SK-N-SH (cell line): ENCODE measurements at regions of chr7 and their contacts with region 1.

Region 1: DNA sequence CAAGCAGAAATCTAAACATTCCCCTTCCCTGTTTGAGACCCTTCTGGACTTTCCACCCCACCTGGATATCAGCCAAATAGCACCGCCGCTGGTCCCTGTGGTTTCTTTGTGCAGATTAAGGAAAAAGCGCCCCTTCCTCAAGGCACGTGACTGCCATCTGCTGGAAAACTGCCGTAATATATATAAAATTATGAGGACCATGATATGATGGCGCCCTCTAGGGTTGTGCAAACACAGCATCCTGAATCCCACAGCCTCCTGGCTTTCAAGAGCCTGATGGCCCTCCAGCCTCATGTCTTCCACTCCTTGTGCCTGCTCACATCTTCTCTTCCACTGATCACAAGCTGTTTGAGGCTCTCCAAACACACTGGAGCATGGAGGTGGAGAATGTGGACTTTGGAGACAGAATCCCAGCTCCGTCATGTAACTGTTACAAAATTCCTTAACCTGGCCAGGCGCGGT is 121.3 kb downstream of the MYL10 start:
- DNase-seq: peak; percentile 86
- H3K4me3 ChIP-seq: no peak overlapping the region; a peak in 1 of 4 replicates
- H3K27ac ChIP-seq: no peak overlapping the region
- H3K4me1 ChIP-seq: no peaks in the 10 kb centered on the region; a peak in 1 of 4 replicates
- H3K27me3 ChIP-seq: peaks cover 22% of the 10 kb centered on the region
- CTCF ChIP-seq: peak; percentile 97
- EP300 ChIP-seq: no peak
- RAD21 ChIP-seq: peak; percentile 99

Region 2: DNA sequence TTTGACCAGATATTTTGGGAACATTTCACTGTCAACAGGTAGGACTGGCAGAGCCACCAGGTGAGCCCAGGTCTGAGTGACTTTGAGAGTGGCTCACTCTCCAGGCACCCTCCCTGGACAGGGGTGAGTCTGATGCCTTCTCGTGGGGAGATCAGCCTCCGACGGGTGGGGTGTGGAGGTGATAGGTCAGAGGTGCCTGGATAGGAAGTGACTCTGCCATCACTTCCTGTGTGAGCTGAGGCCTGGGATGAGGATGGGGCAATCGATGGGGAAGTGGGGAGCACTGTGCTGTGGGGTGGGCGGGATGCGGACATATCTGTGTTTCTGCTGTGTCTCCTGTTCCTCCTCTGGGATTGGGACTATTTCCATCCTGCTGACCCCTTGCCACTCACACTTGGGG is 220.8 kb before region 1 on chr7:
- CTCF ChIA-PET with region 1: interaction called, 14 read pairs
- POLR2A ChIA-PET with region 1: no interaction called
- DNase-seq: no peak
- H3K4me3 ChIP-seq: no peak overlapping the region
- H3K27ac ChIP-seq: no peak overlapping the region
- H3K4me1 ChIP-seq: peaks cover 0 to 2% of the 10 kb centered on the region in 2 experiments; a peak in 1 of 4 replicates
- H3K27me3 ChIP-seq: peaks cover 23% of the 10 kb centered on the region
- CTCF ChIP-seq: no peak
- EP300 ChIP-seq: no peak
- RAD21 ChIP-seq: no peak

Region 3: DNA sequence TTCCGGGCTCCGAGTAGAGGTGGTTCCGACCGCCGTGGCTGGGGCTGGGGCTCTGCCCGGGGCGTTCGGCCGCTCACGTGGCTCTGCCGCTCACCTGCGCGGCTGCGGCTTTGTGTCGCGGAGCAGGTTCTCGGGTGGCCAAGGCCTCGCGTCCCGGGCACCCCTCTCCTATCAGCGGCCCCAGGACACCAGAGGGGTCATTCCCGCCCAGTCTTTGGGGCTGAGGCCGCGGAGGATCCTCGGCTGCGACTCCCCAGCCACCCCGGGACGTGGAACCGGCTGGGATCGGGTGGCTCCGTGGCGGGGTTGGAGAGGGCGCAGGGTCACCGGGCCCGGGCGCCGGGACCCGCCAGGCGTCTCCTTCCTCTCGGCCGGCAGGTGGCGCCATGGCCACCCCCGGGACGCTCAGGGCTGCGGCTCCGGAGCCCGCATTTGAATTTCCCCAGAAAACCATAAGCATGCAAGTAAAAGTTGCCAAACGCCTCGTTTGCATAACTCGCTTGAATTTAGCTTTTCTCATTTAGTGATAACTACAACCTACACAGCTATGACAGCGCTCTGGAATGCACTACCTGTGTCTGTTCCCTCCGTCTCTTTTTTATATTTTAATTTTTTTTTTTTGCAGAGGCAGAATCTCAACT is 144.0 kb before region 1 on chr7:
- CTCF ChIA-PET with region 1: interaction called, 56 read pairs
- POLR2A ChIA-PET with region 1: no interaction called
- DNase-seq: peak; percentile 98
- H3K4me3 ChIP-seq: peak overlapping the region; percentile 56 to 70
- H3K27ac ChIP-seq: peak overlapping the region in 1 of 2 experiments; percentile 9; a peak in 1 of 4 replicates
- H3K4me1 ChIP-seq: peaks cover 0 to 4% of the 10 kb centered on the region in 2 experiments; a peak in 1 of 4 replicates
- H3K27me3 ChIP-seq: peaks cover 11% of the 10 kb centered on the region
- CTCF ChIP-seq: peak; percentile 98
- EP300 ChIP-seq: no peak
- RAD21 ChIP-seq: peak; percentile 91

Region 4: GRCh38 chr7:101410743-101411507 is 96.9 kb before region 1 on chr7:
- CTCF ChIA-PET with region 1: interaction called, 35 read pairs
- POLR2A ChIA-PET with region 1: no interaction called
- DNase-seq: peak; percentile 94
- H3K4me3 ChIP-seq: peak overlapping the region in 1 of 2 experiments; percentile 30; a peak in 1 of 4 replicates
- H3K27ac ChIP-seq: no peak overlapping the region
- H3K4me1 ChIP-seq: peaks cover 0 to 4% of the 10 kb centered on the region in 2 experiments; a peak in 1 of 4 replicates
- H3K27me3 ChIP-seq: peaks cover 10% of the 10 kb centered on the region; the same call in 1 of the 2 replicates
- CTCF ChIP-seq: peak; percentile 88
- EP300 ChIP-seq: no peak
- RAD21 ChIP-seq: peak; percentile 83

Region 5: GRCh38 chr7:101519324-101520023 is 11.7 kb after region 1 on chr7:
- CTCF ChIA-PET with region 1: interaction called, 31 read pairs
- POLR2A ChIA-PET with region 1: no interaction called
- DNase-seq: no peak
- H3K4me3 ChIP-seq: no peak overlapping the region
- H3K27ac ChIP-seq: no peak overlapping the region
- H3K4me1 ChIP-seq: no peaks in the 10 kb centered on the region; a peak in 1 of 4 replicates
- H3K27me3 ChIP-seq: peaks cover 18% of the 10 kb centered on the region; the same call in 1 of the 2 replicates
- CTCF ChIP-seq: no peak
- EP300 ChIP-seq: no peak
- RAD21 ChIP-seq: no peak

Region 6: DNA sequence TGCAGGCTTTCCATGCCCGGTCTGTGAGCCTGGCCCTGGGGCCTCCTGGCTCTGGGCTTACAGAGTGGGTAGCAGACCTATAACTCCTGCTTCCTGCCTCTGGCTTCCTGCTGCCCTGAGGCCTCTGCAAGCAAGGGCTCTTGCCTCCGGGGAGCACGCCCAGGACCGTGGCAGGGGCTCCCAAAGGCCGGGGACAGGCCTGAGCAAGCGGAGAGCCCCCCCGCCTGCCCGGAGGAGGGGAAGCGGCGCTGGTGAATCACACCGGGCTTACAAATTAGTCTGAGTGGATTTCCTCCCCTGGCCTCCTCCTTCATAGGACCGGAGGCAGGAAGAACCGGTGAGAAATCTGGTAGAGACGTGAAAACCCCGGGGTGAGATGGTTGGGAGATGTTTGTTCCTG is 122.8 kb after region 1 on chr7:
- CTCF ChIA-PET with region 1: no interaction called
- POLR2A ChIA-PET with region 1: no interaction called
- DNase-seq: peak; percentile 53
- H3K4me3 ChIP-seq: no peak overlapping the region
- H3K27ac ChIP-seq: peak overlapping the region in 1 of 2 experiments; percentile 46; a peak in 2 of 4 replicates
- H3K4me1 ChIP-seq: peaks cover 0 to 22% of the 10 kb centered on the region in 2 experiments; a peak in 3 of 4 replicates
- H3K27me3 ChIP-seq: no peaks in the 10 kb centered on the region
- CTCF ChIP-seq: no peak
- EP300 ChIP-seq: no peak
- RAD21 ChIP-seq: no peak

Region 7: GRCh38 chr7:102272075-102272917 is 764.5 kb after region 1 on chr7:
- CTCF ChIA-PET with region 1: interaction called, 11 read pairs
- POLR2A ChIA-PET with region 1: no interaction called
- DNase-seq: peak; percentile 95
- H3K4me3 ChIP-seq: no peak overlapping the region; a peak in 1 of 4 replicates
- H3K27ac ChIP-seq: no peak overlapping the region
- H3K4me1 ChIP-seq: peaks cover 0 to 22% of the 10 kb centered on the region in 2 experiments; a peak in 1 of 4 replicates
- H3K27me3 ChIP-seq: no peaks in the 10 kb centered on the region
- CTCF ChIP-seq: peak; percentile 100
- EP300 ChIP-seq: no peak
- RAD21 ChIP-seq: peak; percentile 99